ENCODE measurements at regions of chr10 and their contacts with region 1.

Region 1: GRCh38 chr10:6050801-6051445 is 11.2 kb downstream of the IL2RA start:
- DNase-seq: peak; percentile 99
- H3K4me3 Mint-ChIP-seq: peak overlapping the region; percentile 80
- H3K27ac Mint-ChIP-seq: peak overlapping the region; percentile 98
- H3K4me1 Mint-ChIP-seq: peaks cover 85% of the 10 kb centered on the region
- H3K27me3 Mint-ChIP-seq: no peaks in the 10 kb centered on the region

Region 2: GRCh38 chr10:5293691-5294550 is 757.0 kb before region 1 on chr10:
- CTCF ChIA-PET with region 1: no interaction called
- intact Hi-C with region 1: loop called (anchors 10 kb)
- DNase-seq: peak; percentile 92
- H3K4me3 Mint-ChIP-seq: peak overlapping the region; percentile 85
- H3K27ac Mint-ChIP-seq: peak overlapping the region; percentile 96
- H3K4me1 Mint-ChIP-seq: peaks cover 73% of the 10 kb centered on the region
- H3K27me3 Mint-ChIP-seq: no peaks in the 10 kb centered on the region

Region 3: GRCh38 chr10:5548527-5549223 is 502.2 kb before region 1 on chr10:
- CTCF ChIA-PET with region 1: no interaction called
- intact Hi-C with region 1: no loop called
- DNase-seq: peak; percentile 78
- H3K4me3 Mint-ChIP-seq: no peak overlapping the region
- H3K27ac Mint-ChIP-seq: no peak overlapping the region
- H3K4me1 Mint-ChIP-seq: peaks cover 30% of the 10 kb centered on the region
- H3K27me3 Mint-ChIP-seq: no peaks in the 10 kb centered on the region

Region 4: DNA sequence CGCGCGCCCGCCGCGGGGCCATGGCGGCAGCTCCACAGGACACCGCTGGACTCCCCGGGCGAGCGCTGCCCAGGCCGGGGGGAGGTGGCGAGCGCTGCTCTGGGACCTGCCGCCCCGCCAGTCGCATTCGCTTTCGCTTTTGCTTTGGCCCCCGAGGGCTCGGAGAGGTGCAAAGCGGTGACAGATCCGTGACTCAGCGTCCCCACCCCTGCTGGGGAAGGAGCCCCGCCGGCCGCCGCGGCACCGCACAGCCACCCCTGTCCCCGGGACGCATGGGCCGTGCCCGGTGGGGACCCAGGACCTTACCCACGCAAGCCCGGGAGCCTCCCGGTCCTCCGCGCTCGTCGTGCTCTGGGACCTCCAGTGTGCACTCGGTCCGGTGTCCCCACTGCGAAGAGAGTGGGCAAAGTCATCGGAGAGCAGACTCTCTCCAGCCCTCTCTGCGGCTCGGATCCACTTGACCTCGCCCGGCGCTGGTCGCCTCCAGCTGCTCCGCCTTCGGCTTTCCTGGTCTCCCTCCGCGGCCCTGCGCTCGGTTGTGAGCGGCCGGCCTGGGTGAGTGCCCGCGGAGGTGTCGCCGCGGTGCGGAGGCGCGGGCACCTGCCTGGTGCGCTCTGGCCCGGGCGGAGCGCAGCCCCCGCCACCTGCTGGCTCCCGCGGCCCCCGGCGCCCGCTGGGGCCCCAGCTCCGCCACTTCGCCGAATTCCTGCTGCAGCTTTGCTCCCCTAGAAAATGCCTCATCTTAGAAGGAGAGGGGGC is 73.3 kb before region 1 on chr10 and contains the start of gene IL15RA:
- CTCF ChIA-PET with region 1: interaction called, 6 read pairs
- intact Hi-C with region 1: loop called (anchors 1 kb)
- DNase-seq: peak; percentile 91
- H3K4me3 Mint-ChIP-seq: peak within 1 kb of the TSS; percentile 97
- H3K27ac Mint-ChIP-seq: peak within 1 kb of the TSS; percentile 97
- H3K4me1 Mint-ChIP-seq: peaks cover 24% of the 10 kb centered on the region
- H3K27me3 Mint-ChIP-seq: no peaks in the 10 kb centered on the region
- total RNA-seq, gene IL15RA: 14.7 to 16.3 TPM

Region 5: DNA sequence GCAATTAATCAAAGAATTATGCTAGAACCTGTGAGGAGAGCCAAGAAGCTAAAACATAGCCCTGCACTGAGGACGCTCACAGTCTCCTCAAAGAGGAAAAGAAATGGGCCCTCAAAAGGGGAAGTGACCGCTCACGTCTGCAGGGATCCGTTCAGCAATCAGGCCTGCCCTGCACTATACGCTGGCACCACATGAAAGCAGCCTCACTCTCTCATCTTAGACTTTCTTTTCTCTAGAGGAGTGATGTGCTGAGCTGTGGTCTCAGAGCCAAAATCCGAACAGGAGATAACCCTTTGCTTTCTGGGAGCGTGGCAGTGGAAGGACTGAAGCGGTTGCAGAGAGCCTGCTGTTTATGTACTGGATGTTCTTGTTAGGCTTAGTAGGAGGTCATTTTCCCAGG is 17.5 kb after region 1 on chr10:
- CTCF ChIA-PET with region 1: interaction called, 5 read pairs
- intact Hi-C with region 1: loop called (anchors 1 kb)
- DNase-seq: peak; percentile 71
- H3K4me3 Mint-ChIP-seq: peak overlapping the region; percentile 60
- H3K27ac Mint-ChIP-seq: peak overlapping the region; percentile 78
- H3K4me1 Mint-ChIP-seq: peaks cover 83% of the 10 kb centered on the region
- H3K27me3 Mint-ChIP-seq: no peaks in the 10 kb centered on the region

Region 6: GRCh38 chr10:6136215-6137201 is 85.6 kb after region 1 on chr10:
- CTCF ChIA-PET with region 1: no interaction called
- intact Hi-C with region 1: loop called (anchors 2 kb)
- DNase-seq: peak; percentile 89
- H3K4me3 Mint-ChIP-seq: peak overlapping the region; percentile 47
- H3K27ac Mint-ChIP-seq: peak overlapping the region; percentile 92
- H3K4me1 Mint-ChIP-seq: peaks cover 63% of the 10 kb centered on the region
- H3K27me3 Mint-ChIP-seq: peaks cover 4% of the 10 kb centered on the region

Region 7: GRCh38 chr10:6498771-6499170 is 447.8 kb after region 1 on chr10:
- CTCF ChIA-PET with region 1: no interaction called
- intact Hi-C with region 1: loop called (anchors 5 kb)
- DNase-seq: peak; percentile 67
- H3K4me3 Mint-ChIP-seq: peak overlapping the region; percentile 20
- H3K27ac Mint-ChIP-seq: peak overlapping the region; percentile 85
- H3K4me1 Mint-ChIP-seq: peaks cover 47% of the 10 kb centered on the region
- H3K27me3 Mint-ChIP-seq: no peaks in the 10 kb centered on the region